ENCODE measurements at regions of chr3 and their contacts with region 1.

Region 1: DNA sequence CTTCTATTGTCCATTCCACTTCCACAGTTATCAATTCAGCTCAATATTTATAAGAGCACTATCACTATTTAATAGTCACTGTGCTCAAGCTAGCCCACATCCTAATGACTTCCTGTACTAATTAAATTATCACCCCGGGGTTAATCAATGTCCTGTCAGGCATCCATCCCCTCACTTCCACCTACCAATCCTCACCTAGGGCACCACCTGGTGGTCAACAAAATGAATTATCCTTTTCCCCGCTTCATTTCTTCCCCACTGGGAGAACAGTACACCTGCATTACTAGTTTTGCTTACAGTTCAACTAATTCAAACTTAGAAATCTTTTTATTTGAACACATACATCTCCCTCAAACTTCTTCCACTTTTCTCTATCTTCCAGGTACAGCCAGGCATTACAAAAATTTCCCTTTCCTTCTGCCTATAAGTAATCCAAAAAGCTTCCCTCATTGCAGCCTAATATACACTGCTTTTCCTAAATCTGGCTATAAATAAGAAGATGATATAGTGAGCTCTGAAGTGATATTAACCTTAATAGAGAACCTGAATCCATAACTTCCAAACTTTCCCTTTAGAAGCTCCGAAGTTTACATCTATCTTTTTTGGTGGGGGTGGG is 68.5 kb downstream of the TMCC1 start:
- DNase-seq: peak in 1 of 2 donors; percentile 84
- H3K4me3 ChIP-seq: no peak overlapping the region
- H3K27ac ChIP-seq: no peak overlapping the region
- H3K4me1 ChIP-seq: peaks cover 0 to 48% (median 6%) of the 10 kb centered on the region in 4 donors
- H3K27me3 ChIP-seq: no peaks in the 10 kb centered on the region
- CTCF ChIP-seq: peak in 5 of 7 experiments; percentile 45 to 81 (median 63)
- EP300 ChIP-seq: no peak
- POLR2A ChIP-seq: no peak

Region 2: DNA sequence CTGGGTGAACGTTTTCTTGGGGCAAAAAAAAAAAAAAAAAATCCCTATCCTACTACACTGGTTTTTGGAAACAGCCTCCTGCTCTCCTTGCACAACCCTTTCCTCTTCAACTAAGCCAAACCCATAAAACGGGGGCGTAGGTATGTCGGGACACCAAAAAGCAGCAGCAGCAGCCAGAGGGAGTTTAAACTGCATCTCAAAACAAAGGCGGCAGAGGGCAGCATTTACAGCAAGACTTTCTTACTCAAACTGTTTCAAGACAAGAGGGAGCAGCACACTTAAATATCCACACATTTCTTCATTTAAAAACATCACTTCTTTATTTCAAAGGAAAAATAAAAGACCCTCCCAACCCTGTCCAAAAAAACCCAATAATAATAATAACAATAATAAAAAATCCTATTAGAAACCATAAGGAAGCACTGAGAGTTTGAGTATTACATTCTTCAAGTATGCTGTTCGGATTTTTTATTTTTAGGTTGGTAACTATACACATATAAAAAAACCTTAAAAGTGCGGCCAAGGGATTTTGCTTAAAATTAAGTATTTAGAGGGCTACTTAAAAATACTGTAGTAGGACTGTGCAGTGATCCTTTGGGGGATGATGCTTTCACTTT is 174.7 kb before region 1 on chr3:
- intact Hi-C with region 1: loop called (anchors 5 kb)
- DNase-seq: peak; percentile 68 to 88
- H3K4me3 ChIP-seq: no peak overlapping the region
- H3K27ac ChIP-seq: no peak overlapping the region
- H3K4me1 ChIP-seq: peaks cover 0 to 27% (median 3%) of the 10 kb centered on the region in 4 donors
- H3K27me3 ChIP-seq: no peaks in the 10 kb centered on the region
- CTCF ChIP-seq: peak in 5 of 7 experiments; percentile 61 to 85 (median 63)
- EP300 ChIP-seq: no peak
- POLR2A ChIP-seq: no peak